ENCODE measurements at regions of chr18 and their contacts with region 1.

Region 1: GRCh38 chr18:13318731-13319501 is 100.4 kb downstream of the LDLRAD4 start:
- DNase-seq: no peak
- ATAC-seq: peak in 3 of 4 donors; percentile 39 to 73 (median 41)
- H3K4me3 ChIP-seq: no peak overlapping the region
- H3K27ac ChIP-seq: no peak overlapping the region
- H3K4me1 ChIP-seq: peaks cover 11% of the 10 kb centered on the region
- H3K27me3 ChIP-seq: no peaks in the 10 kb centered on the region
- CTCF ChIP-seq: no peak

Region 2: DNA sequence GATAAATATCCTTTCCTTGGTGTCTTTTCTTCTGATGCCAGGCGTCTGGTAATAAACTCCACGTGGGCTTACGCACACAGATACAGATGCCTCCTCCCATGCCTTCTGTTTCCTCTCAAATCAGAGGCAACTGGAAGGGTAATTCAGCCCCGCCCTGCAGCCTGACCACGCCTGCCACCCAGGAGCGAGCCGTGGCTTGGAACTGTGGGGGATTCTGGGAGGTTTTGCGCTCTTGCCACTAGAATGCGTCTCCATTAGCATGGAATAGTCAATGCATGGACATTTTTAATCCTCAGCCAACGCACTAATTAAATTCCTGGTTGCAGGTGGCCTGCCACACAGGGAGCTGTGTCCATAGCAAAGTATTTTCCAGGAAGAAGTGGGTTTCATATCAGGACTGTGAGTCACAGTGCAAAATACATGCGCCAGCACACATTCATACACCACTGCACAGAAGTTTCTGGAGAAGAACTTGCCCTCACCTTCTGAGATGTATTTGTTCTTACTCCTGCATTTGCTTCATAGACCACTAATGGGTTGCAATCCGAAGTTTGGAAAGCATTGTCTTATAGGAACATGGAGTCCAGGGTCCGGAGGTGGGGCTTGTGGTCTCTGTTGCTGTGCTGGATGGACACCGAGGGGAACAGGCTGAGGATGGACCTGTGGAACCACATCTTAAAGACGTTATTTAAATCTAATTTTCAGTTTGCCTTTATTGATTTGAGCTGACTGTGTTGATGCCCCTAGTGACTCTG is 51.0 kb after region 1 on chr18:
- intact Hi-C with region 1: loop called in 1 of 2 experiments (anchors 10 kb)
- DNase-seq: no peak
- ATAC-seq: no peak
- H3K4me3 ChIP-seq: no peak overlapping the region
- H3K27ac ChIP-seq: no peak overlapping the region
- H3K4me1 ChIP-seq: peaks cover 4% of the 10 kb centered on the region
- H3K27me3 ChIP-seq: no peaks in the 10 kb centered on the region
- CTCF ChIP-seq: no peak